Breast epithelium (tissue), 4 donors: ENCODE measurements at regions of chr12 and their contacts with region 1.

Region 1: GRCh38 chr12:22641353-22642053 is 16.5 kb downstream of the ETNK1 start:
- DNase-seq: no peak
- H3K4me3 ChIP-seq: no peak overlapping the region
- H3K27ac ChIP-seq: no peak overlapping the region
- H3K4me1 ChIP-seq: no peaks in the 10 kb centered on the region
- H3K27me3 ChIP-seq: no peaks in the 10 kb centered on the region
- CTCF ChIP-seq: no peak
- POLR2A ChIP-seq: no peak

Region 2: GRCh38 chr12:22350886-22351285 is 290.6 kb before region 1 on chr12:
- intact Hi-C with region 1: no loop called
- DNase-seq: no peak
- H3K4me3 ChIP-seq: no peak overlapping the region
- H3K27ac ChIP-seq: no peak overlapping the region
- H3K4me1 ChIP-seq: no peaks in the 10 kb centered on the region
- H3K27me3 ChIP-seq: no peaks in the 10 kb centered on the region
- CTCF ChIP-seq: no peak
- POLR2A ChIP-seq: no peak

Region 3: DNA sequence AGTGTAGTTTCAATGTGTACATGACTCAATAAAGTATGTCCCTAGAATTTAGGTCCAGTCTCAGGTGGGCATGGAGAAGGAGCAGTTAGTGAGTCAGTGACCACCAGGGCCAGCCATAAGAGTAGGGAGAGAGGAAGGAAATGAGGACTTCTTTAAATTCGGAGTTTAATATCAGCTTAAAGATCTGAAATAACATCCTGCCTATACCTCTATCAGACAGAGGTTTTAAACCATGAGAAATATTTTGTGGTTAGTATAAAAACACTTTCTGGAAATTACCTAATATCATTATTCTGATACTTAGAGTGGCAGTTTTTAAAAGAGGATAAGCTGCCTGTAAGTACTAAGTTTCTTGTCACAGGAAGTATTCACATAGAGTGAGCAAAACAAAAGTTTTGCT is 245.2 kb before region 1 on chr12:
- intact Hi-C with region 1: loop called (anchors 5 kb)
- DNase-seq: no peak
- H3K4me3 ChIP-seq: no peak overlapping the region
- H3K27ac ChIP-seq: no peak overlapping the region
- H3K4me1 ChIP-seq: no peaks in the 10 kb centered on the region
- H3K27me3 ChIP-seq: no peaks in the 10 kb centered on the region
- CTCF ChIP-seq: no peak
- POLR2A ChIP-seq: no peak

Region 4: GRCh38 chr12:22658214-22658613 is 16.7 kb after region 1 on chr12:
- intact Hi-C with region 1: no loop called
- DNase-seq: no peak
- H3K4me3 ChIP-seq: no peak overlapping the region
- H3K27ac ChIP-seq: no peak overlapping the region
- H3K4me1 ChIP-seq: no peaks in the 10 kb centered on the region
- H3K27me3 ChIP-seq: no peaks in the 10 kb centered on the region
- CTCF ChIP-seq: no peak
- POLR2A ChIP-seq: no peak

Region 5: GRCh38 chr12:22951206-22951605 is 309.7 kb after region 1 on chr12:
- intact Hi-C with region 1: no loop called
- DNase-seq: no peak
- H3K4me3 ChIP-seq: no peak overlapping the region
- H3K27ac ChIP-seq: no peak overlapping the region
- H3K4me1 ChIP-seq: no peaks in the 10 kb centered on the region
- H3K27me3 ChIP-seq: no peaks in the 10 kb centered on the region
- CTCF ChIP-seq: no peak
- POLR2A ChIP-seq: no peak

Region 6: DNA sequence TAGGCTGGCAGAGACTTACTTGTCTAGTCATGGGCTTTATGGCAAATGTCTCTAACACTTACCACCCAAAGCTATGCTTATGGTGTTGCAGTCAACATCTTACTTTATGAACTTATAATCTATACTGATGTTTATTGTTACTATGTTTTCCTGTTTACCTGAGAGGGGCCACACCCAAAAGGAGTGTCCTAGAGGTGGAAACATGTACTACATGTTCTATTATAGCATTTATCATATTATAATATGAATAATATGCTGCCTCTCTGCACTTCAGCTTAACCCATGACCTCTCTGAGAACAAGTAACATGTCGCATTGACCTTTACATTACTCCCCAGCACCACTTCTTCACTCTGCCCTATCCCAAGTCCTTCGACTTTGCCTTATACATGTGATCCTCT is 485.3 kb after region 1 on chr12:
- intact Hi-C with region 1: no loop called
- DNase-seq: no peak
- H3K4me3 ChIP-seq: no peak overlapping the region
- H3K27ac ChIP-seq: no peak overlapping the region
- H3K4me1 ChIP-seq: no peaks in the 10 kb centered on the region
- H3K27me3 ChIP-seq: no peaks in the 10 kb centered on the region
- CTCF ChIP-seq: no peak
- POLR2A ChIP-seq: no peak